Activated CD4-positive, alpha-beta memory T cell treated with anti-CD3 and anti-CD28 coated beads for 36 hours (primary cell): ENCODE measurements at regions of chr16 and their contacts with region 1.

Region 1: GRCh38 chr16:58629572-58630104 is at the start of gene CNOT1:
- DNase-seq: peak; percentile 99
- H3K4me3 Mint-ChIP-seq: peak within 1 kb of the TSS; percentile 89
- H3K27ac Mint-ChIP-seq: peak within 1 kb of the TSS; percentile 99
- H3K4me1 Mint-ChIP-seq: peaks cover 26% of the 10 kb centered on the region
- H3K27me3 Mint-ChIP-seq: peaks cover 1% of the 10 kb centered on the region
- total RNA-seq, gene CNOT1: 230 to 242 TPM

Region 2: GRCh38 chr16:58249780-58250478 is 379.7 kb before region 1 on chr16:
- CTCF ChIA-PET with region 1: no interaction called
- POLR2A ChIA-PET with region 1: no interaction called
- intact Hi-C with region 1: loop called (anchors 1 kb)
- DNase-seq: peak; percentile 90
- H3K4me3 Mint-ChIP-seq: peak overlapping the region; percentile 88
- H3K27ac Mint-ChIP-seq: no peak overlapping the region
- H3K4me1 Mint-ChIP-seq: peaks cover 13% of the 10 kb centered on the region
- H3K27me3 Mint-ChIP-seq: peaks cover under 1% of the 10 kb centered on the region

Region 3: GRCh38 chr16:58366247-58367031 is 263.2 kb before region 1 on chr16:
- CTCF ChIA-PET with region 1: no interaction called
- POLR2A ChIA-PET with region 1: no interaction called
- intact Hi-C with region 1: no loop called
- DNase-seq: no peak
- H3K4me3 Mint-ChIP-seq: no peak overlapping the region
- H3K27ac Mint-ChIP-seq: no peak overlapping the region
- H3K4me1 Mint-ChIP-seq: no peaks in the 10 kb centered on the region
- H3K27me3 Mint-ChIP-seq: peaks cover 25% of the 10 kb centered on the region

Region 4: DNA sequence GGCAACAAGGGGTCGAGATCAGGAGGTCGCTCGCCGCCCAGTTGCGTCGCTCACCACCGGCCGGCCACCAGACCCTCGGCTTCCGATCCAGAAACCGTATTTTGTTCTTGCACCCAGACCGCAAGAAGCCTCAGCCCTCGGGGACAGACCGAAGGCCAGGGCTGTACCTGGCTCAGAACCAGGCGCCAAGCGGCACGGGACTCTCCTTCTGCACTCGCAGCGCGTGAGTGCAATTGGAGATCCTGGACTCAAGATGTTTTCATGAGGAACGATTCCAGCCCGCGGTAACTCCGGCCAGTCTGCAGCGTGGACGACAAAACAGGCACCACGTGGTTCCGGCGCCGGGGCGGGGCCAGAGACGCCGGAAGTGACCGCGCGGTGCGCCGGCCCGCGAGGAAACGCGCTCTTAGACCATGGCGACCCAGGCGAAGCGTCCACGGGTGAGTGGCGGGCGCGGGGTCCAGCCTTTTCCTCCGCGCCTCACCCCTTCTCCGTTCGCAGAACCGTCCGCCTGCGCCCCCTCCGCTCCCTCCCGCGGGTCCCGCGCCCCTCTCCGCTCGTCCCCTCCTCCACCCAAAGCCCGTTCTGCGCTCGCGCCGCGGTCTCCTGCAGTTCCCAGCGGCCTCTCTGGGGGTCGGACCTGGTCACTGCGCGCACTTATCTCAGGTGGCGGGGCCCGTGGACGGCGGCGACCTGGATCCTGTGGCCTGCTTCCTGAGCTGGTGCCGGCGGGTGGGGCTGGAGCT is 114.3 kb before region 1 on chr16 and contains the start of gene SETD6:
- CTCF ChIA-PET with region 1: interaction called, 3 read pairs
- POLR2A ChIA-PET with region 1: interaction called, 4 read pairs
- intact Hi-C with region 1: loop called (anchors 1 kb)
- DNase-seq: peak; percentile 85
- H3K4me3 Mint-ChIP-seq: peak within 1 kb of the TSS; percentile 89
- H3K27ac Mint-ChIP-seq: peak within 1 kb of the TSS; percentile 76
- H3K4me1 Mint-ChIP-seq: peaks cover 45% of the 10 kb centered on the region
- H3K27me3 Mint-ChIP-seq: no peaks in the 10 kb centered on the region
- total RNA-seq, gene SETD6: 12.9 to 14.5 TPM

Region 5: GRCh38 chr16:58684354-58685083 is 54.9 kb after region 1 on chr16 and contains the start of gene SLC38A7:
- CTCF ChIA-PET with region 1: no interaction called
- POLR2A ChIA-PET with region 1: interaction called, 3 read pairs
- intact Hi-C with region 1: loop called (anchors 1 kb)
- DNase-seq: peak; percentile 83
- H3K4me3 Mint-ChIP-seq: peak within 1 kb of the TSS; percentile 91
- H3K27ac Mint-ChIP-seq: no peak within 1 kb of the TSS
- H3K4me1 Mint-ChIP-seq: peaks cover 15% of the 10 kb centered on the region
- H3K27me3 Mint-ChIP-seq: no peaks in the 10 kb centered on the region
- total RNA-seq, gene SLC38A7: 5.0 to 5.4 TPM

Region 6: GRCh38 chr16:58755989-58756649 is 126.5 kb after region 1 on chr16:
- CTCF ChIA-PET with region 1: interaction called, 9 read pairs
- POLR2A ChIA-PET with region 1: interaction called, 3 read pairs
- intact Hi-C with region 1: loop called (anchors 1 kb)
- DNase-seq: peak; percentile 88
- H3K4me3 Mint-ChIP-seq: no peak overlapping the region
- H3K27ac Mint-ChIP-seq: peak overlapping the region; percentile 1
- H3K4me1 Mint-ChIP-seq: peaks cover 8% of the 10 kb centered on the region
- H3K27me3 Mint-ChIP-seq: no peaks in the 10 kb centered on the region